Activated T-helper 2 cell treated with anti-CD3 and anti-CD28 coated beads, Interferon-gamma antibody, Interleukin-2, Interleukin-4, amounts not matched to agents 10 μg/mL and 5 μg/mL and 100 μg/mL, durations not matched to agents 14 hours and 24 hours and 36 hours (primary cell): ENCODE measurements at regions of chr1 and their contacts with region 1.

Region 1: GRCh38 chr1:161165742-161166668 is at the start of gene PPOX:
- DNase-seq: peak; percentile 95
- H3K4me3 Mint-ChIP-seq: peak within 1 kb of the TSS; percentile 92
- H3K27ac Mint-ChIP-seq: peak within 1 kb of the TSS; percentile 96
- H3K4me1 Mint-ChIP-seq: peaks cover 36% of the 10 kb centered on the region
- H3K27me3 Mint-ChIP-seq: no peaks in the 10 kb centered on the region
- total RNA-seq, gene PPOX: 35.6 and 36.5 TPM in 2 replicates

Region 2: DNA sequence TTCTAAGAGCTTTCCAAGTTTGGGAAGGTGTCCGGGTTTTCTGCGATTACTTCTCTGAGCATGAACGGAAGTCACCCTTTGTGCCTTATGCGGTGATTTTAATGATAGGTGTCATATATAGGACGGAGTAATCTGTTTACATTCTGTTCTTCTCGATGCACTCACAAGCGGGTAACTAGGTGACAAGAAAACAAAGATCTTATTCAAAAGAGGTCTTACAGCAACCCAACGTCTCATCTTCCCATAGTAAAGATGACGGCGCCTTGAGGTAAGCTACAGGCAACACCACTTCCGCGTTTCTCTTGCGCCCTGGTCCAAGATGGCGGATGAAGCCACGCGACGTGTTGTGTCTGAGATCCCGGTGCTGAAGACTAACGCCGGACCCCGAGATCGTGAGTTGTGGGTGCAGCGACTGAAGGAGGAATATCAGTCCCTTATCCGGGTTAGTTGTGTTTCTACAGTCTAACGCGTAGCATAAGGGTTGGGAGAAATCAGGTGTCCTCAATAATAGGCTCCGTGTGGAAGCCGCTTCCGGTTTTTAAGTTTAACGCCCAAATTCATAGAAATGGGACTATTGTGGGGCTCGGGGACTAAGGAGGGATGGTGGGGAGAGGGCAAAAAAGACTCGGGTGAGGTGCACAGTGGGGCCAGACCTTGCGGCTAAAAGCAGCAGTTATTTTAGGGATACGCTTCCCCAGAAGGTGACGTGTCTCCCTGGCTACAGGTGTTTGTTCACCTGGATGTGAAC is 12.2 kb before region 1 on chr1 and contains the start of gene UFC1:
- intact Hi-C with region 1: no loop called
- DNase-seq: peak; percentile 82
- H3K4me3 Mint-ChIP-seq: peak within 1 kb of the TSS; percentile 100
- H3K27ac Mint-ChIP-seq: peak within 1 kb of the TSS; percentile 100
- H3K4me1 Mint-ChIP-seq: peaks cover 22% of the 10 kb centered on the region
- H3K27me3 Mint-ChIP-seq: no peaks in the 10 kb centered on the region
- total RNA-seq, gene UFC1: 91.5 and 91.8 TPM in 2 replicates

Region 3: GRCh38 chr1:161177112-161177935 is 11.3 kb after region 1 on chr1 and contains the start of gene B4GALT3:
- intact Hi-C with region 1: loop called (anchors 1 kb)
- DNase-seq: peak; percentile 92
- H3K4me3 Mint-ChIP-seq: peak within 1 kb of the TSS; percentile 99
- H3K27ac Mint-ChIP-seq: peak within 1 kb of the TSS; percentile 97
- H3K4me1 Mint-ChIP-seq: peaks cover 48% of the 10 kb centered on the region
- H3K27me3 Mint-ChIP-seq: no peaks in the 10 kb centered on the region
- total RNA-seq, gene B4GALT3: 57.5 and 57.6 TPM in 2 replicates